Left ventricle myocardium inferior (tissue), 1 donor: ENCODE measurements at regions of chr3 and their contacts with region 1.

Region 1: DNA sequence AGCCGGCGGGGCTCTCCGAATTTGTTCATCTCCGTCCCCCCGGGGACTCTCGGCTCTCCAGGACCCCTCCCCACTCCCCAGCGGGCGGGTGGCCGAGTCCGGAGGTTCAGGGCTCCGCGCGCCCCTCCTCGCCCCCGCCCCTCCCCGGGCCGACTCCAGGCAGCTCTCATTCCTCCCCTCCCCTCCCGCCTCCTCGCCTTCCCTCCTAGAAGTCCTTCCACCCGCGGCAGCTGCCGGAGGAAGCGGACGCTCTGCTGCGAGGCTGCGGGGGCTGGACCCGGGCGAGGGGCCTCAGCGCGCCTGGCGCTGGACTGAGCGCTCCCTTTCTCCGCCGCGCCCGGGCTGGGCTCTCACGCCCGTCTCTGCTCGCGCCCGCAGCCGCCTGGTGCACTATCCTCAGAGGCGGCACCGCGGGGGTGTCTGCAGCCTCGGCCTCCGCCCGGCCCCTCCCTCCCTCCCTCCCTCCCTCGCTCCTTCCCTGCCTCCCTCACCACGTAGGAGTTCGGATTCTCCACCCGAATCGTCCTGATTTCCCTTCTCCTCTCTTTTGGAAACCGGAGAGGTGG is at the start of gene ROBO2:
- DNase-seq: peak; percentile 18
- H3K4me3 ChIP-seq: peak within 1 kb of the TSS; percentile 67
- H3K27ac ChIP-seq: no peak within 1 kb of the TSS
- H3K4me1 ChIP-seq: peaks cover 17% of the 10 kb centered on the region
- H3K27me3 ChIP-seq: peaks cover 95% of the 10 kb centered on the region
- CTCF ChIP-seq: no peak
- total RNA-seq, gene ROBO2: 0.19 TPM

Region 2: GRCh38 chr3:77254967-77255831 is 215.5 kb after region 1 on chr3:
- intact Hi-C with region 1: loop called (anchors 5 kb)
- DNase-seq: no peak
- H3K4me3 ChIP-seq: no peak overlapping the region
- H3K27ac ChIP-seq: no peak overlapping the region
- H3K4me1 ChIP-seq: no peaks in the 10 kb centered on the region
- H3K27me3 ChIP-seq: no peaks in the 10 kb centered on the region
- CTCF ChIP-seq: peak; percentile 74